ENCODE measurements at regions of chr17 and their contacts with region 1.

Region 1: DNA sequence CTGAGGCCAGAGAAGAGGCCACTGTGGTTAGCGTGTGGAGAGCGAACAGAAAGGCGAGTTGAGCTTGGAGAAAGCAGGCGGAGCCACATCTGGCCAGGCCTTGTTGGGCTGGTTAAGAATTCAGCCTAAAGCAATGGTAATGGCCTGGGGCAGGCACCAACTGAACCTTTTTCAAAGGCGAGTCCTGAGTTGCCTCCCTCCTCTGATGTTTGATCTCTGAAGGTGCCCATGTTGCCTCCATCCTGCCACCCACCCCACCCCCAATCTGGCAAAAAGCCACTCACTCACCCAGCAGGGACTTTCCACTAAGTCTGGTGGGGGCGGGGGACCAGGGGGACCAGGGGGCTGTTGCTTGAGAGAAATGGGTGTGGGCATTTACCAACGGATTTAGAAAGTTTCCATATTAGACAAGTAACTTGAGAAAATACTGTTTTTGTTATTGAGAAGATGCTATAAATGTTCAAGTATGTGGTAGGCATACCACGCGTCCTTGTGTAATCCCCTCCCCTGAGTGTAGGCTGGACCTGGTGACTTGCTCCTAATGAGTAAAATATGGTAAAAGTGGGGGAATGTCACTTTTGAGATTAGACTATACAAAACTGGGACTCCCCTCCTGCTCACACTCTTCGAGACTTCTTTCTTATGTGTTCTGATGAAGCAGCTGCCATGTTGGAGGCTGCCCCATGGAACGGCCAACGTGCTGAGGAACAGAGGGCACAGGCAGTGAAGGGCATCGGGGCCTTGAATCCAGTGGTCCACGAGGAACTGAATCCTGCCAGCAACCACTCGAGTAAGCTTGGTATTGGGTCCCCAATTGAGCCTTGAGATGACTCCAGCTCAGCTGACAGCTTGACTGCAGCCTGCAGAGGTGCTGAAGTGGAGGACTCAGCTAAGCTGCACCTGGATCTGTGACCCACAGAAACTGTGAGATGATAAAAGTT is 29.9 kb upstream of the TNS4 start:
- DNase-seq: peak; percentile 32
- H3K4me3 ChIP-seq: no peak overlapping the region
- H3K27ac ChIP-seq: no peak overlapping the region
- H3K4me1 ChIP-seq: peaks cover 20% of the 10 kb centered on the region
- CTCF ChIP-seq: no peak

Region 2: GRCh38 chr17:40303009-40303657 is 228.2 kb before region 1 on chr17:
- CTCF ChIA-PET with region 1: no interaction called
- POLR2A ChIA-PET with region 1: no interaction called
- intact Hi-C with region 1: loop called (anchors 5 kb)
- DNase-seq: peak; percentile 60
- H3K4me3 ChIP-seq: no peak overlapping the region
- H3K27ac ChIP-seq: no peak overlapping the region
- H3K4me1 ChIP-seq: peaks cover under 1% of the 10 kb centered on the region
- CTCF ChIP-seq: peak; percentile 87

Region 3: GRCh38 chr17:40362696-40363110 is 168.6 kb before region 1 on chr17:
- CTCF ChIA-PET with region 1: interaction called, 6 read pairs
- POLR2A ChIA-PET with region 1: no interaction called
- intact Hi-C with region 1: loop called (anchors 1 kb)
- DNase-seq: peak; percentile 82
- H3K4me3 ChIP-seq: peak overlapping the region; percentile 53
- H3K27ac ChIP-seq: no peak overlapping the region
- H3K4me1 ChIP-seq: peaks cover 4% of the 10 kb centered on the region
- CTCF ChIP-seq: peak; percentile 83

Region 4: GRCh38 chr17:40399185-40399584 is 132.1 kb before region 1 on chr17:
- CTCF ChIA-PET with region 1: no interaction called
- POLR2A ChIA-PET with region 1: no interaction called
- intact Hi-C with region 1: loop called (anchors 1 kb)
- DNase-seq: peak; percentile 66
- H3K4me3 ChIP-seq: no peak overlapping the region
- H3K27ac ChIP-seq: no peak overlapping the region
- H3K4me1 ChIP-seq: no peaks in the 10 kb centered on the region
- CTCF ChIP-seq: peak; percentile 90

Region 5: GRCh38 chr17:40443583-40444327 is 87.6 kb before region 1 on chr17:
- CTCF ChIA-PET with region 1: interaction called, 3 read pairs
- POLR2A ChIA-PET with region 1: no interaction called
- intact Hi-C with region 1: loop called (anchors 1 kb)
- DNase-seq: peak; percentile 20
- H3K4me3 ChIP-seq: no peak overlapping the region
- H3K27ac ChIP-seq: no peak overlapping the region
- H3K4me1 ChIP-seq: no peaks in the 10 kb centered on the region
- CTCF ChIP-seq: peak; percentile 41; the same call in 1 of the 2 replicates

Region 6: DNA sequence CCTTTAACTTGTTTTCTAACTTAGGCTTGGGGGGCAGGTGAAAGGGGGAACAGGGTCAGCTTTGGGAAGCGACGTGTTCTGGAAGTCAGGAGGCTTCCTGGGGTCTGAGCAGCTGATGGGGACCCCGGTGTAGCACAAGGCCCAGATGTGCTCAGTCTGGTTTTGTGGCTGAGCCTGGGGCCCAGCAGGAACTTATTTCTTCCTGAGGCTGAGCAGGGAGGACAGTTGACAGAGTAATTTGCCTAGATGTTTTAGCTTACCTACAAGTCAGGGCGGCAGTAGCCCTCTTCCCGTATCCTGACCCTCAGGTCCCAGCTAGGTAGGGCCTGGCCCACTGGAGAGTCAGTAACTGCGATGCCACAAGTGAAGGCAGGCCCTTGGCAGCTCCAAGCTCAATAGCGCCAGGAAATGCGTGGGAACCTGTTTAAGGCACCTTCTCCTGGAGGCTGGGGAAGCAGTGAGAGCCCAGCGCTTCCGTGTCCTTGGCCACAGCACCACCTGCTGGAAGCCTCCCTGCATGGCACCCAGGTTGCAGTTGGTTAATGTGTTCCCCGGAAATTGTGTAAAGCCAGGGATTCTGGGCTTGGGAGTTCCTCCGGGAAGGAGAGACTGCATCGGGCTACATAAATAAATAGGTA is 28.8 kb after region 1 on chr17:
- CTCF ChIA-PET with region 1: interaction called, 15 read pairs
- POLR2A ChIA-PET with region 1: no interaction called
- intact Hi-C with region 1: loop called (anchors 1 kb)
- DNase-seq: peak; percentile 88
- H3K4me3 ChIP-seq: peak overlapping the region; percentile 57
- H3K27ac ChIP-seq: peak overlapping the region; percentile 37
- H3K4me1 ChIP-seq: peaks cover 47% of the 10 kb centered on the region
- CTCF ChIP-seq: peak; percentile 99

Region 7: DNA sequence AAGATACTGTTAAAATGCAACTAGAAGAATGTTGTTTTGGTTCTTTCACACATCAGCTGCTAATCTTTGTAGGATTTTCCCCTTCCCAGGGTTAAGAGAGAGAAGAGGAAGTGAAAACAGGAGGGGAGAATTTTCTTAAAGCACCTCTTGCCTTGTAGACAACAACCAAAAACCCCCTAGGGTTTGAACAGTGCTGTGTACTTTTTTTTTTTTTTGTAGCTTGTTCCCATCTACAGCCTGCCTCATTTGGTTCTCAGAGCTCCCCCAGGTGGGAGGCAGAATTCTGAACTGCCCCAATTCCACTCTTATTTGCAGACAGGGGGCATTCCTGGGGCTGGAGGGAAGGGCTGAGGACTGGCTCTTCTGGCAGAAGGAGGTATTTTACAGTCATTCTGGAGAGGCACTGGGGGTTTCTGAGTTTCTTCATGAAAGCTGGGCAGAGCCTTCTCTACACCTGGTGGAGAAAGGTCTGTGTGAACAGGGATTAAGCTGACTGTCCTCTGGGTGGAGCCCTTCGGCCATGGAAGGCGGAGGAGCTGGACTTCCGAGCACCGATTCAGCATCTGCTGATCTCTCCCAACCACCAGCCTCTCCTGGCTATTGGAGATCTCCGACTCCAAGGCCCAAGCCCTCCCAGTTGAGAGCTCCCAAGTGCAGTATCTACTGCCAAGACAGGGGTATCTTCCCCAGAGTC is 84.1 kb after region 1 on chr17:
- CTCF ChIA-PET with region 1: interaction called, 10 read pairs
- POLR2A ChIA-PET with region 1: no interaction called
- intact Hi-C with region 1: no loop called
- DNase-seq: peak; percentile 73
- H3K4me3 ChIP-seq: no peak overlapping the region
- H3K27ac ChIP-seq: peak overlapping the region; percentile 52
- H3K4me1 ChIP-seq: peaks cover 25% of the 10 kb centered on the region
- CTCF ChIP-seq: peak; percentile 84